IMR-90 (cell line): ENCODE measurements at regions of chr6 and their contacts with region 1.

Region 1: GRCh38 chr6:79536954-79537747 is at the start of gene LCA5:
- DNase-seq: peak; percentile 97
- ATAC-seq: peak; percentile 98
- H3K4me3 ChIP-seq: peak within 1 kb of the TSS; percentile 91
- H3K27ac ChIP-seq: peak within 1 kb of the TSS; percentile 90
- H3K4me1 ChIP-seq: no peaks in the 10 kb centered on the region
- H3K27me3 ChIP-seq: no peaks in the 10 kb centered on the region
- CTCF ChIP-seq: no peak
- POLR2A ChIP-seq: 0 out of 2 replicates have a peak, but pooled peaks have one; percentile 59
- RAD21 ChIP-seq: no peak
- total RNA-seq, gene LCA5: 2.0 and 3.3 TPM in 2 replicates

Region 2: DNA sequence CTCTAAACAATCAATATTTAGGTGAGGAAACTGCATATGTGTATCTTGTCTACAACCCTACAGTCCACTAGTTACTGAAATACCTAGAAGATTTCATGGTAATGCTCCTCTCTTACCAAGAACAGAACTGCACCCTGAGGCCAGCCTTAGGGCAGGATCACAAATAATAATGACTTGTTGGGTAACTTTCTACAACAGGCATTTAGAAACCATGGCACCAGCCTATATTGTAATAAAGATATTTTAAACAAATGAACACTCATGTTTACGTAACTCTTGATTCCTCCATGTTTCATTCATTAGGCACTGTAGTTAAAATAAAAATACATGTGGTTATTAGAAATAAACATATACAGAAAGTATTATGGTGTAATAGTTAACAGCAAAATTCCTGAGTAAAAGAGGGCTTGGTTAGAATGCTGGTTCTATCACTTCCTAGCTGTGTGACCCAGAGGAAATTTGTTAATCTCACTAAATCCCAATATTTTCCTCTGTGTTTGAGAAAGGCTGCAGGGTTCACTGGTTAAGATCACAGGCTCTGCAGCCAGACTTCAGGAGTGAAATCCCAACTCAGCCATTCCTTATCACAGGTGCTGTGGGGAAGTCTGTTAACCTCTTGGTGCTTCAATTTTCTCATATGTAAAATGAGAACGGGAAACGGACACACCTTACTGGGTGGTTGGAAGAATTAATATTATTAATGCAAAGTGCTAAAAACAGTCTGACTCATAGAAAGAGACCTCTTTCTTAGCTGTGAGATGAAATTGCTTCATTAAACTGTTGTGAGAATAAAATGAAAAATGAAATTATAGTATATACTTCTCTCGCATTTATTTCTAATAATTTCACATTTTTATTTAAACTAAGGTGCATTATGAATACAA is 311.2 kb before region 1 on chr6:
- CTCF ChIA-PET with region 1: no interaction called
- POLR2A ChIA-PET with region 1: no interaction called
- dilution Hi-C with region 1: no loop called
- in situ Hi-C with region 1: loop called (anchors 10 kb)
- intact Hi-C with region 1: no loop called
- DNase-seq: peak; percentile 2
- ATAC-seq: peak; percentile 69
- H3K4me3 ChIP-seq: no peak overlapping the region
- H3K27ac ChIP-seq: no peak overlapping the region
- H3K4me1 ChIP-seq: peaks cover 2% of the 10 kb centered on the region; the same call in 1 of the 2 replicates
- H3K27me3 ChIP-seq: no peaks in the 10 kb centered on the region
- CTCF ChIP-seq: no peak
- POLR2A ChIP-seq: no peak
- RAD21 ChIP-seq: no peak

Region 3: DNA sequence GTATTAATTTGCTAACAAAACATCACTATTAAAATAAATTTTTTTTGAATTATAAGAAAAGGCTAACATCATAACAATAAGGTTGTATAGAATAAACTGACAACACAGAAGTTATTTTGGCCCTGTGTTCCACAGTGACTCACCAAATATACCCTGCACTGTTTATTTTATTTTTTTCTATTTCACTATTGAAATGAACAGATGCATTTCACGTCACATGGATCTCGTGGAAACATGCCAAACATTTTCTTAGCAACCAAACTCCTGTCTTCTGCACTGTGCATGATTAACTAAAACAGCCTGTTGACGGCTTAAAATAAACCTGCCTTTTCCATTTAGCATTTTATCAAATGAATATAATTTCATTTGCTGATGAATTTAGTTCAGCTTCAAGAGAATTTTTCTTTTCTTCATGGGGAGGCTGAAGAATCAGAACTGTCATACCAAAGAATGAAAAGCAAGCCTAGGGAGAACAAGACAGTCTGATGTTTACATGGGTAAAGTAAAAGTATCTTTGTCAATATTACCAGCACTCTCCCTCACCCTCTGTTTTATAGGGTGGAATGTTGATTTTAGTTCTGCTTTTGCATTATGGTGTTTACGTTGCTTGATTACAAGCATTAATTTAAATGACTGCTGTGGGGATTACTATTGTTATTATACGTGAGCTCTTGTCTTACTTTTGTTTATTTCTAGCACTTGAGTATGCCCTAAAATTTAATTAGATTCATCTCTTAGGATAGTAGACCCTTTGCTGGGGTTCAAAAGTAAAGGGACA is 115.3 kb before region 1 on chr6:
- CTCF ChIA-PET with region 1: no interaction called
- POLR2A ChIA-PET with region 1: no interaction called
- dilution Hi-C with region 1: no loop called
- in situ Hi-C with region 1: no loop called
- intact Hi-C with region 1: loop called (anchors 2 kb)
- DNase-seq: peak; percentile 92
- ATAC-seq: peak; percentile 78
- H3K4me3 ChIP-seq: no peak overlapping the region
- H3K27ac ChIP-seq: no peak overlapping the region
- H3K4me1 ChIP-seq: peaks cover 2% of the 10 kb centered on the region
- H3K27me3 ChIP-seq: peaks cover 4% of the 10 kb centered on the region
- CTCF ChIP-seq: no peak
- POLR2A ChIP-seq: no peak
- RAD21 ChIP-seq: no peak

Region 4: GRCh38 chr6:79494841-79495240 is 42.3 kb before region 1 on chr6:
- CTCF ChIA-PET with region 1: no interaction called
- POLR2A ChIA-PET with region 1: no interaction called
- dilution Hi-C with region 1: no loop called
- in situ Hi-C with region 1: no loop called
- intact Hi-C with region 1: no loop called
- DNase-seq: no peak
- ATAC-seq: no peak
- H3K4me3 ChIP-seq: no peak overlapping the region
- H3K27ac ChIP-seq: no peak overlapping the region
- H3K4me1 ChIP-seq: no peaks in the 10 kb centered on the region
- H3K27me3 ChIP-seq: no peaks in the 10 kb centered on the region
- CTCF ChIP-seq: no peak
- POLR2A ChIP-seq: no peak
- RAD21 ChIP-seq: no peak